PC-9 (cell line): ENCODE measurements at regions of chr9 and their contacts with region 1.

Region 1: DNA sequence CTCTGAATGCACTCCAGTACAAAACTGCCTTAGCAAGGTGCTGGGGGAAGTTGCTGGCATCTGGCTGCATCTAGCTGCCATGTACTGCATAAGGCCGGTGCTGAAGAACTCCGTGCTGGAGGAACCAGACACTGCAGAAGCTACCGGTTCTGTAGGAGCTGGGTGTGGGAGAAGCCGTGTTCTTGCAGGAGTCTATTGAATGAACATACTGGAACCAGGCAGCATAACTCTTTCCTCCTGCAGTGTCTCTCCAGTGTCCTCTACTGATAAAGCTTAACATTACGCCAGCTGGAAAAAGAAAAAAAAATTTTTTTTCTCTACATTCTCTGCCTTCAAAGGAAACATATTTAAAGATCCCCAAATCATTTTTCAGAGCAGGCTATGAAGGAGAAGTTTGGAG is 38.5 kb downstream of the VPS13A start:
- DNase-seq: no peak
- H3K4me3 ChIP-seq: no peak overlapping the region
- H3K27ac ChIP-seq: no peak overlapping the region
- H3K4me1 ChIP-seq: no peaks in the 10 kb centered on the region
- H3K27me3 ChIP-seq: no peaks in the 10 kb centered on the region
- CTCF ChIP-seq: peak; percentile 36; the same call in 1 of the 2 replicates

Region 2: GRCh38 chr9:76810377-76810957 is 405.4 kb before region 1 on chr9:
- CTCF ChIA-PET with region 1: no interaction called
- POLR2A ChIA-PET with region 1: no interaction called
- intact Hi-C with region 1: loop called (anchors 2 kb)
- DNase-seq: peak in 1 of 2 experiments; percentile 31
- H3K4me3 ChIP-seq: no peak overlapping the region
- H3K27ac ChIP-seq: no peak overlapping the region
- H3K4me1 ChIP-seq: no peaks in the 10 kb centered on the region
- H3K27me3 ChIP-seq: peaks cover 52% of the 10 kb centered on the region
- CTCF ChIP-seq: peak; percentile 89

Region 3: GRCh38 chr9:77158772-77159513 is 56.9 kb before region 1 on chr9:
- CTCF ChIA-PET with region 1: no interaction called
- POLR2A ChIA-PET with region 1: no interaction called
- intact Hi-C with region 1: no loop called
- DNase-seq: no peak
- H3K4me3 ChIP-seq: no peak overlapping the region
- H3K27ac ChIP-seq: no peak overlapping the region
- H3K4me1 ChIP-seq: no peaks in the 10 kb centered on the region
- H3K27me3 ChIP-seq: no peaks in the 10 kb centered on the region; the same call in 1 of the 2 replicates
- CTCF ChIP-seq: no peak